T-cell (primary cell): ENCODE measurements at regions of chr4 and their contacts with region 1.

Region 1: DNA sequence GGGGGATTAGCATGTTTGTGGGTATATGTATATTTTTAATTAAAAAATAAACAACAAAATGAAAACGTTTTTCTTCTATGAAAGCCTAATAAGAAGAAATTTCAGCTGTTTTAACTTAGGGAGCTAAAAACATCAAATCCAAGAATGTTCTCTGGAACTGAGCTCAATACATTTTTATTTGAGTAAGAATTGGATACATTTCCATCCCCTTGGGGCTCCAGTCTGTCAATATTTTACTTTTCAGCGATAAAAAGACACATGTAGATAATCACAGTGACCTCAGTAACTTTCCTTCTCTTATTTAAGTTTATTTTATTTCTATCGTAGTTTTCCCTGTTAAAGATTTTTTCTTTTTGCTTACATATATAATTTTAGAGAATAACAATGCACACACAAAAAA is 59.3 kb downstream of the ELOVL6 start:
- DNase-seq: no peak
- ATAC-seq: no peak
- H3K4me3 ChIP-seq: no peak overlapping the region
- H3K4me3 Mint-ChIP-seq: no peak overlapping the region
- H3K27ac ChIP-seq: no peak overlapping the region
- H3K27ac Mint-ChIP-seq: no peak overlapping the region
- H3K4me1 ChIP-seq: no peaks in the 10 kb centered on the region
- H3K4me1 Mint-ChIP-seq: peaks cover 0 to 7% (median 0%) of the 10 kb centered on the region in 3 donors
- H3K27me3 ChIP-seq: no peaks in the 10 kb centered on the region
- H3K27me3 Mint-ChIP-seq: peaks cover 0 to 4% of the 10 kb centered on the region in 2 donors

Region 2: DNA sequence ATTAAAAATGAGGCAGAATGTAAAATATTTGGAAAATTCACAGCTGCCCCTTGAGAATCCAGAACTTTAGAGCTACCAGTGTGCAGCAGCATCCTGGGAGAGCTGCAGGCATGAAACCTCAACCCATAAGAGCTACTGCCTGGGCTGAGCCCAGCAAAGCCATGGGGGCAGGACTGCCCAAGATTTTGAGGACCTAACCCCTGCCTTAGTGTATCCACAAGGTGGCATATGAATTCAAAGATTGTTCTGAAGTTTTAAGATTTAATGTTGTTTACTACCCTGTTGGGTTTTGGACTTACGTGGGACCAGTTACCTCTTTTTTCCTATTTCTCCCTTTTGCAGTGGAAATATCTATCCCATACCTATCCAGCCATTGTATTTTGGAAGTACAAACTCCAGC is 462.2 kb before region 1 on chr4:
- CTCF ChIA-PET with region 1: no interaction called
- POLR2A ChIA-PET with region 1: no interaction called
- DNase-seq: peak in 1 of 35 experiments; percentile 17
- ATAC-seq: no peak
- H3K4me3 ChIP-seq: no peak overlapping the region
- H3K4me3 Mint-ChIP-seq: no peak overlapping the region
- H3K27ac ChIP-seq: peak overlapping the region; percentile 4
- H3K27ac Mint-ChIP-seq: peak overlapping the region; percentile 43 to 73
- H3K4me1 ChIP-seq: no peaks in the 10 kb centered on the region
- H3K4me1 Mint-ChIP-seq: peaks cover 31 to 44% (median 40%) of the 10 kb centered on the region in 3 donors
- H3K27me3 ChIP-seq: no peaks in the 10 kb centered on the region
- H3K27me3 Mint-ChIP-seq: no peaks in the 10 kb centered on the region

Region 3: GRCh38 chr4:109764376-109764775 is 374.7 kb before region 1 on chr4:
- CTCF ChIA-PET with region 1: interaction called in 1 of 2 experiments, 10 read pairs
- POLR2A ChIA-PET with region 1: no interaction called
- DNase-seq: no peak
- ATAC-seq: no peak
- H3K4me3 ChIP-seq: no peak overlapping the region
- H3K4me3 Mint-ChIP-seq: no peak overlapping the region
- H3K27ac ChIP-seq: no peak overlapping the region
- H3K27ac Mint-ChIP-seq: no peak overlapping the region
- H3K4me1 ChIP-seq: no peaks in the 10 kb centered on the region
- H3K4me1 Mint-ChIP-seq: no peaks in the 10 kb centered on the region
- H3K27me3 ChIP-seq: peaks cover 0 to 2% of the 10 kb centered on the region in 2 experiments
- H3K27me3 Mint-ChIP-seq: peaks cover 6 to 15% of the 10 kb centered on the region in 2 donors